AG04450 (cell line): ENCODE measurements at regions of chr15 and their contacts with region 1.

Region 1: GRCh38 chr15:44968475-44968874 is 12.0 kb downstream of the TERB2 start:
- DNase-seq: no peak
- H3K4me3 ChIP-seq: no peak overlapping the region
- H3K27ac ChIP-seq: no peak overlapping the region
- H3K27me3 ChIP-seq: no peaks in the 10 kb centered on the region
- CTCF ChIP-seq: no peak

Region 2: GRCh38 chr15:45037936-45038335 is 69.5 kb after region 1 on chr15:
- CTCF ChIA-PET with region 1: interaction called, 15 read pairs
- POLR2A ChIA-PET with region 1: no interaction called
- DNase-seq: no peak
- H3K4me3 ChIP-seq: no peak overlapping the region
- H3K27ac ChIP-seq: no peak overlapping the region
- H3K27me3 ChIP-seq: no peaks in the 10 kb centered on the region
- CTCF ChIP-seq: no peak

Region 3: GRCh38 chr15:45083223-45083622 is 114.7 kb after region 1 on chr15:
- CTCF ChIA-PET with region 1: no interaction called
- POLR2A ChIA-PET with region 1: no interaction called
- DNase-seq: no peak
- H3K4me3 ChIP-seq: no peak overlapping the region
- H3K27ac ChIP-seq: no peak overlapping the region
- H3K27me3 ChIP-seq: peaks cover 3% of the 10 kb centered on the region
- CTCF ChIP-seq: no peak

Region 4: GRCh38 chr15:45134682-45135604 is 166.5 kb after region 1 on chr15:
- CTCF ChIA-PET with region 1: no interaction called
- POLR2A ChIA-PET with region 1: no interaction called
- DNase-seq: no peak
- H3K4me3 ChIP-seq: no peak overlapping the region
- H3K27ac ChIP-seq: no peak overlapping the region
- H3K27me3 ChIP-seq: peaks cover 72% of the 10 kb centered on the region
- CTCF ChIP-seq: no peak